ENCODE measurements at regions of chr2 and their contacts with region 1.

Region 1: GRCh38 chr2:29309090-29310029 is 194.1 kb downstream of the CLIP4 start:
- DNase-seq: peak in 1 of 2 donors; percentile 59
- ATAC-seq: peak in 7 of 8 donors; percentile 59 to 78 (median 66)
- H3K4me3 ChIP-seq: no peak overlapping the region
- H3K27ac ChIP-seq: no peak overlapping the region
- H3K4me1 ChIP-seq: peaks cover 0 to 2% (median 0%) of the 10 kb centered on the region in 9 donors
- H3K27me3 ChIP-seq: peaks cover 0 to 38% (median 16%) of the 10 kb centered on the region in 7 donors
- CTCF ChIP-seq: peak; percentile 49 to 80 (median 70)

Region 2: GRCh38 chr2:29223851-29224694 is 85.3 kb before region 1 on chr2:
- intact Hi-C with region 1: no loop called
- DNase-seq: peak in 1 of 2 donors; percentile 34
- ATAC-seq: peak; percentile 42 to 79 (median 66)
- H3K4me3 ChIP-seq: no peak overlapping the region
- H3K27ac ChIP-seq: no peak overlapping the region
- H3K4me1 ChIP-seq: peaks cover 0 to 18% (median 0%) of the 10 kb centered on the region in 9 donors
- H3K27me3 ChIP-seq: peaks cover 0 to 58% (median 37%) of the 10 kb centered on the region in 7 donors
- CTCF ChIP-seq: no peak

Region 3: GRCh38 chr2:29238497-29238896 is 70.9 kb before region 1 on chr2:
- intact Hi-C with region 1: loop called in 1 of 10 experiments (anchors 2 kb)
- DNase-seq: no peak
- ATAC-seq: no peak
- H3K4me3 ChIP-seq: no peak overlapping the region
- H3K27ac ChIP-seq: no peak overlapping the region
- H3K4me1 ChIP-seq: no peaks in the 10 kb centered on the region
- H3K27me3 ChIP-seq: peaks cover 0 to 71% (median 21%) of the 10 kb centered on the region in 7 donors
- CTCF ChIP-seq: peak in 7 of 9 donors; percentile 40 to 56 (median 46)

Region 4: GRCh38 chr2:29469516-29469915 is 160.2 kb after region 1 on chr2:
- intact Hi-C with region 1: no loop called
- DNase-seq: no peak
- ATAC-seq: no peak
- H3K4me3 ChIP-seq: no peak overlapping the region
- H3K27ac ChIP-seq: no peak overlapping the region
- H3K4me1 ChIP-seq: no peaks in the 10 kb centered on the region
- H3K27me3 ChIP-seq: no peaks in the 10 kb centered on the region
- CTCF ChIP-seq: no peak

Region 5: DNA sequence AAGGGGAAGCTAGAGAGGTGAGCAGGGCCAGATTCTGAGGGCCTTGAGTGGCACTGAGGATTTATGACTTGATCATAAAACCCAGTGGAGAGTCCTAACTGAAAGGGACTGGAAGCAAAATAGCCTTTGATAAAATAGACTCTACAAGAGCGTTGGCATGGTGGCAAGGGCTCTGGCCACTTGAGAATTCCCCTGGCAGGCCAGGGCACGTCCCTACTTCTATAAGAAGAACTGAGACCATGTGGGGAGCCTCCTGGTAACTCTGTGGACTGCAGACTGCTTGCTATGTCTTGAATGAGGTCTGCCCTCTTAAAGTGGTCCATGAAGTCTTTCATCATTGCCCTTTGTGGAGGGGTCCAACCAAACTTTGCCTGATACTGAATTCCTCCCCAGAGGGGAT is 287.2 kb after region 1 on chr2:
- intact Hi-C with region 1: no loop called
- DNase-seq: peak; percentile 27 to 34
- ATAC-seq: peak in 7 of 8 donors; percentile 25 to 86 (median 80)
- H3K4me3 ChIP-seq: no peak overlapping the region
- H3K27ac ChIP-seq: no peak overlapping the region
- H3K4me1 ChIP-seq: peaks cover 0 to 9% (median 0%) of the 10 kb centered on the region in 9 donors
- H3K27me3 ChIP-seq: no peaks in the 10 kb centered on the region
- CTCF ChIP-seq: no peak

Region 6: DNA sequence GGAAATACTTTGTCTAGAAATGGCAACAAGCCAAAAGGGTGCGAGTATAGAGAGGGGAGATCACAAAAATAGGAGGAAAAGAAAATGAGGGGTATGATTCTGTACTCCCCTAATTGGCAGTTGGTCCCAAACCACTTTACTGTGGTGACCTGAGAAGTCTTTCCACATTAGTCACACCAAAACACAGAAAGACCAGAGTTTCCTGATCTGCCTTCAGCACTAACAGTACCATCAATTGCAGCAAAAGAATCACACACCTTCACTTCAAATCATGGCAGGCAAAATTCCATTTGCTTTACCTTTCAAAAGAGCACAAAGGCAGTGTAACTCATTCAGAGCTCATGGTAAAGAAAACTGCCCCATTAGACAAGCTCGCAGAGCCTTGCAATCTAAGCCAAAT is 525.3 kb after region 1 on chr2:
- intact Hi-C with region 1: loop called in 1 of 10 experiments (anchors 5 kb)
- DNase-seq: no peak
- ATAC-seq: no peak
- H3K4me3 ChIP-seq: no peak overlapping the region
- H3K27ac ChIP-seq: no peak overlapping the region
- H3K4me1 ChIP-seq: no peaks in the 10 kb centered on the region
- H3K27me3 ChIP-seq: peaks cover 0 to 11% (median under 1%) of the 10 kb centered on the region in 7 donors
- CTCF ChIP-seq: no peak

Measured in heart right ventricle (tissue), 16 donors.